Activated CD8-positive, alpha-beta T cell treated with anti-CD3 and anti-CD28 coated beads for 36 hours (primary cell): ENCODE measurements at regions of chr17 and their contacts with region 1.

Region 1: DNA sequence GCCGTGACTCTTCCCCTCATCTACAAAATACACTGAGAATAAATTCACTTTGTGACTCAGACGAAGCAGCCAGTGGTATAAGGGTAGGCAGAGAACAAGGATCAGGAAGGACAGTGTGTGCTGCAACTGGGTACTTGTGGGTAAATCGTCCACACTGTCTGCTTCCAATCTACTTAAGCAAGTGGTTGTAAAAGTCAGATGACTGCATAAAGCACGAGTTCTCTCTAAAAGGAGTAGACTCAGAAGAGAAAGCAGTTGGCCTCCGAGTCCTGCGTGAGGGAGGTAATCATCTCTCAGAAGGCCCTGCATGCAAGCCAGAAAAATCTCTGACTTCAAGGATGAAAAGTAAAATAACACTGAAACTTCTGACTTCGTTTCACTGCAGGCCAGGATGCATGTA is 43.1 kb downstream of the ANKFY1 start:
- DNase-seq: no peak
- ATAC-seq: no peak
- H3K4me3 Mint-ChIP-seq: no peak overlapping the region
- H3K27ac Mint-ChIP-seq: no peak overlapping the region
- H3K4me1 Mint-ChIP-seq: peaks cover 2% of the 10 kb centered on the region
- H3K27me3 Mint-ChIP-seq: no peaks in the 10 kb centered on the region
- CTCF ChIP-seq: no peak

Region 2: DNA sequence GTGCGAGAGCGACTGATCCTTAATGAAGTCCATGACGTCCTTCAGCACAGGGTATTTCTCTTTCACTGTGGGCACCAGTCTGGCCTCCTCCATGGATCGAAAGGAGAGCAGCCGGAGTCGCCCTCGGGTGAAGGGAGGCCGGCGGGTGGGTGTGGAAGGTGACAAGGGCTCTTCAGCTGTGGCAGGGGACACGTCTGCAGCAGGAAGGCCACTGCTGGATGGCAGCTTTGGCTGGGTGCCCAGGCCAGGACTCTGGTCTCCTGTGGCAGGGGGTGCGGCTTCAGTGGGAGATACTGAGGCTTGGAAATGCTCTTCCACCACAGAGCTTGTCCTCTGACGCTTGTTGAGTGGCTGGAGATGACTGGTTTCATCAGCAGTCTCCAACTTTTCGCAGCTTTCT is 156.3 kb before region 1 on chr17:
- CTCF ChIA-PET with region 1: no interaction called
- POLR2A ChIA-PET with region 1: no interaction called
- intact Hi-C with region 1: no loop called
- DNase-seq: no peak
- ATAC-seq: no peak
- H3K4me3 Mint-ChIP-seq: no peak overlapping the region
- H3K27ac Mint-ChIP-seq: no peak overlapping the region
- H3K4me1 Mint-ChIP-seq: no peaks in the 10 kb centered on the region
- H3K27me3 Mint-ChIP-seq: no peaks in the 10 kb centered on the region
- CTCF ChIP-seq: no peak

Region 3: GRCh38 chr17:4199818-4200402 is 20.7 kb before region 1 on chr17:
- CTCF ChIA-PET with region 1: interaction called, 39 read pairs
- POLR2A ChIA-PET with region 1: interaction called, 3 read pairs
- intact Hi-C with region 1: no loop called
- DNase-seq: peak; percentile 48
- ATAC-seq: peak; percentile 69
- H3K4me3 Mint-ChIP-seq: no peak overlapping the region
- H3K27ac Mint-ChIP-seq: no peak overlapping the region
- H3K4me1 Mint-ChIP-seq: peaks cover 10% of the 10 kb centered on the region
- H3K27me3 Mint-ChIP-seq: no peaks in the 10 kb centered on the region
- CTCF ChIP-seq: peak; percentile 84

Region 4: GRCh38 chr17:4249452-4250029 is 28.9 kb after region 1 on chr17:
- CTCF ChIA-PET with region 1: interaction called, 31 read pairs
- POLR2A ChIA-PET with region 1: no interaction called
- intact Hi-C with region 1: no loop called
- DNase-seq: no peak
- ATAC-seq: no peak
- H3K4me3 Mint-ChIP-seq: no peak overlapping the region
- H3K27ac Mint-ChIP-seq: no peak overlapping the region
- H3K4me1 Mint-ChIP-seq: peaks cover 41% of the 10 kb centered on the region
- H3K27me3 Mint-ChIP-seq: no peaks in the 10 kb centered on the region
- CTCF ChIP-seq: peak; percentile 52

Region 5: DNA sequence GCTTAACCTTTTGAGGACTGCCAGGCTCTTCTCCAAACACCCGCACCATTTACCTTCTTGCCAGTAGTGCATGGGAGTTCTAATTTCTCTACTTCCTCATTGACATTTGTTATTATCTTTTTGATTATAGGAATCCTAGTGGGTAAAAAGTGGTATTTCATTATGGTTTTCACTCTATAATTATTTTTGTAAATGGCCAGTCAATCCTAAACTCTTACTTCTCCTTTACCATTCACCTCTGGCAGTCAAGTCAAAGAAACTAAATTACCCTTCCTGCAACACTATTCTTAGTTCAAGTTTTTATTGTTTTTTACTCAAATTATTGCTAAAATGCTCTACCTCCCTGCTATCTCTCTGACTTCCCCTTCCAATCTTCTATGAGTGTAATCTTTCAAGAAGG is 72.9 kb after region 1 on chr17:
- CTCF ChIA-PET with region 1: interaction called, 12 read pairs
- POLR2A ChIA-PET with region 1: no interaction called
- intact Hi-C with region 1: no loop called
- DNase-seq: no peak
- ATAC-seq: no peak
- H3K4me3 Mint-ChIP-seq: no peak overlapping the region
- H3K27ac Mint-ChIP-seq: no peak overlapping the region
- H3K4me1 Mint-ChIP-seq: peaks cover 5% of the 10 kb centered on the region
- H3K27me3 Mint-ChIP-seq: no peaks in the 10 kb centered on the region
- CTCF ChIP-seq: no peak

Region 6: GRCh38 chr17:4304417-4305027 is 83.9 kb after region 1 on chr17:
- CTCF ChIA-PET with region 1: interaction called, 12 read pairs
- POLR2A ChIA-PET with region 1: no interaction called
- intact Hi-C with region 1: no loop called
- DNase-seq: peak; percentile 77
- ATAC-seq: peak; percentile 74
- H3K4me3 Mint-ChIP-seq: no peak overlapping the region
- H3K27ac Mint-ChIP-seq: no peak overlapping the region
- H3K4me1 Mint-ChIP-seq: peaks cover 10% of the 10 kb centered on the region
- H3K27me3 Mint-ChIP-seq: no peaks in the 10 kb centered on the region
- CTCF ChIP-seq: peak; percentile 83

Region 7: GRCh38 chr17:4412933-4413831 is 192.5 kb after region 1 on chr17:
- CTCF ChIA-PET with region 1: interaction called, 122 read pairs
- POLR2A ChIA-PET with region 1: no interaction called
- intact Hi-C with region 1: loop called (anchors 1 kb)
- DNase-seq: peak; percentile 95
- ATAC-seq: peak; percentile 99
- H3K4me3 Mint-ChIP-seq: peak overlapping the region; percentile 12
- H3K27ac Mint-ChIP-seq: peak overlapping the region; percentile 59
- H3K4me1 Mint-ChIP-seq: peaks cover 5% of the 10 kb centered on the region
- H3K27me3 Mint-ChIP-seq: no peaks in the 10 kb centered on the region
- CTCF ChIP-seq: peak; percentile 67